A673 (cell line): ENCODE measurements at regions of chr5 and their contacts with region 1.

Region 1: DNA sequence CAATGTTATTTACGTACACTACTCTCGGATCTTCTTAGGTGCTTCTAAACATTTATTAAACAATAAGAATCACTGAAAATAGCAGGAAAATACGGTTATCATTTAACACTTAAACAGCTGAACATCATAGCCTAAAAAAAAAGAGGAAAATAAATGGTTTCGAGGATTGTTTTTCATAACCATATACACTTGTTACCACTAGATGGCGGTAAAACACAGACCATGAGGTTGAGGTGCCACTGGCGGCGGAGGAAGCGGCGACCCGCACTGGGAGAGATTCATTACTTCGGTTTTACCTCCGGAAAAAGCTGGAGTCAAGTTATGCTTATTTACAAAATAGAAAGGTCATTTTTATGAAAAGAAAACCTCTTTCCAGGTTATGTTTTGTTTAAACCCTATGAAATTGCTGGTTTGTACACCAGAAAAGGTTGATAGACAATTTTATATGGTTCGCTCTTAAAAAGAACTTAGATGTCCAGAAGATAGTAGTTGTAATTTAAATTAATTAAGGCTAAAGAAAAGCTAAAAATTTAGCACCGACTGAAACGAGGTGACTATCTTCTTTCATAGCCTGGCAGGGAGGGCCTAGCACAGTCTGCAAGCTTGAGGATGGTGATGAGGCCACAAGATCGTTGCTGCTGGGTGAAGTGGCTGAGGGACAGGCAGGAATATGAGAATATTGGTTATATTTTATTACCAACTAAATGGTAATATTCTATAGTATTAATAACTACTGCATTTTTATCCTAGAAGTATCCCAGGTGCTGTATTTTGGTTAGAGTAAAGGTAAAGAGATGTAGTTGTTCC is 605.7 kb downstream of the RAB3C start:
- DNase-seq: peak; percentile 79
- H3K4me3 ChIP-seq: peak overlapping the region; percentile 36
- H3K27ac ChIP-seq: no peak overlapping the region
- H3K4me1 ChIP-seq: peaks cover 9% of the 10 kb centered on the region
- H3K27me3 ChIP-seq: peaks cover 13% of the 10 kb centered on the region
- CTCF ChIP-seq: peak; percentile 76

Region 2: GRCh38 chr5:59367791-59368394 is 179.3 kb after region 1 on chr5:
- CTCF ChIA-PET with region 1: interaction called, 4 read pairs
- POLR2A ChIA-PET with region 1: no interaction called
- intact Hi-C with region 1: loop called (anchors 5 kb)
- DNase-seq: peak; percentile 65
- H3K4me3 ChIP-seq: no peak overlapping the region
- H3K27ac ChIP-seq: no peak overlapping the region
- H3K4me1 ChIP-seq: no peaks in the 10 kb centered on the region
- H3K27me3 ChIP-seq: no peaks in the 10 kb centered on the region
- CTCF ChIP-seq: peak; percentile 82

Region 3: GRCh38 chr5:59380350-59380951 is 191.8 kb after region 1 on chr5:
- CTCF ChIA-PET with region 1: interaction called, 11 read pairs
- POLR2A ChIA-PET with region 1: no interaction called
- intact Hi-C with region 1: loop called (anchors 1 kb)
- DNase-seq: peak; percentile 63
- H3K4me3 ChIP-seq: no peak overlapping the region
- H3K27ac ChIP-seq: no peak overlapping the region
- H3K4me1 ChIP-seq: no peaks in the 10 kb centered on the region
- H3K27me3 ChIP-seq: no peaks in the 10 kb centered on the region
- CTCF ChIP-seq: peak; percentile 61

Region 4: GRCh38 chr5:59393585-59394420 is 205.2 kb after region 1 on chr5:
- CTCF ChIA-PET with region 1: no interaction called
- POLR2A ChIA-PET with region 1: no interaction called
- intact Hi-C with region 1: no loop called
- DNase-seq: no peak
- H3K4me3 ChIP-seq: no peak overlapping the region
- H3K27ac ChIP-seq: no peak overlapping the region
- H3K4me1 ChIP-seq: no peaks in the 10 kb centered on the region
- H3K27me3 ChIP-seq: no peaks in the 10 kb centered on the region
- CTCF ChIP-seq: no peak

Region 5: GRCh38 chr5:59673438-59674058 is 484.9 kb after region 1 on chr5:
- CTCF ChIA-PET with region 1: interaction called, 4 read pairs
- POLR2A ChIA-PET with region 1: no interaction called
- intact Hi-C with region 1: loop called (anchors 2 kb)
- DNase-seq: peak; percentile 66
- H3K4me3 ChIP-seq: no peak overlapping the region
- H3K27ac ChIP-seq: no peak overlapping the region
- H3K4me1 ChIP-seq: no peaks in the 10 kb centered on the region
- H3K27me3 ChIP-seq: no peaks in the 10 kb centered on the region
- CTCF ChIP-seq: peak; percentile 85

Region 6: DNA sequence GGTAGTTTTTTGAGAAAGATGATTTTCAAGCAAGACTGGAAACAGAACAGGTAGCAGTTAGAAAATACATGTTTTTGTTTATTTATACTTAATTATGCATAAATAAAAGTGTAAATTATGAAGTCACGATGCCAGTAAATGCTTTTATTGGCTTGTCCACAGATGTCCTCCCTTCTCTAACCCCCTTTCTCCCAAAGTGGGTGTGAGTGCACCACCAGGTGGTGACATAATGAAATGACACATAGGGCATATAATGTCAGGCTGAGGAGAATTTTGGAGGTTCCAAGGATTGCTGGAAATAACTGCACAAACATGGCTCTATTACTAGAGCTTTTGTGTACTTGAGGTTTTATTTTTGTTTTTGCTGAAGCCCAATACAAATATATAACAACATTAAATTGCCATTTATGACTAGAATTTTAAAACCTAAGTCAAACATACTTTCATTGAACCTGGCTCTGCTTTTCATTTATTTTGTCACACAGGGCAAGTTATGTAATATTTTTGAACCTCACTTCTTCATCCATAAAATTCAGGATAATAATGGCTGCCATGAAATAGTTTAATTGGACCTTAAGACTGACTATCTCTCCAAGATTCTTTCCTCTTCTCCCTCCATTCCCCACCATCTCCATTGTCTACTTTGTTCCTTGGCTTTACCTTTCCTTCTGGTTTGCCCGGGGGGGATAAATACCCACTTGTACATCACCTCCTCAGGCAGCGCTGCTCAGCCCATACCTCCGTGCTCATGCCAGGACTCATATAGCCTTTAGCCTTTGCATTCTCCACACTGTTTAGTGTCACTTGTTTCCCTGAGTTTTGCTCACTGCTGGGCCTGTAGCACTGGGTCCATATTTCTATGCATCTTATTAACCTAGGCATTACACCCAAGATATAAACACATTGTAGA is 536.1 kb after region 1 on chr5:
- CTCF ChIA-PET with region 1: no interaction called
- POLR2A ChIA-PET with region 1: no interaction called
- intact Hi-C with region 1: loop called (anchors 10 kb)
- DNase-seq: peak; percentile 69
- H3K4me3 ChIP-seq: no peak overlapping the region
- H3K27ac ChIP-seq: no peak overlapping the region
- H3K4me1 ChIP-seq: no peaks in the 10 kb centered on the region
- H3K27me3 ChIP-seq: peaks cover 8% of the 10 kb centered on the region
- CTCF ChIP-seq: peak; percentile 78

Region 7: DNA sequence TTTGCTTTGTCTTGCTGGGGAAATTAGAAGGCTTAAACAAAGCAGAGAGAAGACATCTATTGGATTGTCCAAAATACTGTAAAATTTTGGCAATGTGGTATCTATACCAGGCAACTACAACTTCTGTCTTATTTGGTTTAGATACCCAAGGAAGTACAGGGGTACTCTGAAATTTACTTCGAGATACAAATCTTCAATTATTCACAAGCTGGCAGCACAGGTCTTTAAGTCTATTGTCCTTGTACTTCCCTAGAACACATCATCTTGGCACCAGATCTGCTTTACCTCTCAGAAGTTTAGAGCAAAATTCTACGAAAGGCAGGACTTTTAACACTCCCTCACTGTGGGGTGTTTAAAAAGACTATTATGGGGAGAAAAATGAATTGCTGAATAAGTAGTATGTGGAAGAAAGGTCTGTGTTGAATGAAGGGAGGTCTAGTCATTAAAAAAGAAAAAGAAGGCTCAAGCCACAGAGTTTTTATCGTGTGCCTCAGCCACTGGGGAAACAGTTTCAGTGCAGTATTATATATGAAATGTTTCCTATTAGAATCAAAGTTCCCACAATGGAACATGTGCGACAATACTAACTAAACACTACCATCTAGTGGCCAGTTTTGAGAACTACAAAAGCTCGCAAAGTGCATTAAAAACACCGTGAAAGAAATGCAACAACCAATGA is 611.2 kb after region 1 on chr5:
- CTCF ChIA-PET with region 1: interaction called, 6 read pairs
- POLR2A ChIA-PET with region 1: no interaction called
- intact Hi-C with region 1: loop called (anchors 5 kb)
- DNase-seq: peak; percentile 73
- H3K4me3 ChIP-seq: no peak overlapping the region
- H3K27ac ChIP-seq: no peak overlapping the region
- H3K4me1 ChIP-seq: no peaks in the 10 kb centered on the region
- H3K27me3 ChIP-seq: peaks cover 16% of the 10 kb centered on the region
- CTCF ChIP-seq: peak; percentile 76